Activated CD8-positive, alpha-beta T cell treated with anti-CD3 and anti-CD28 coated beads for 36 hours (primary cell): ENCODE measurements at regions of chr3 and their contacts with region 1.

Region 1: GRCh38 chr3:4493014-4493940 is at the start of gene ITPR1:
- DNase-seq: peak; percentile 99
- ATAC-seq: peak; percentile 93
- H3K4me3 Mint-ChIP-seq: peak within 1 kb of the TSS; percentile 81
- H3K27ac Mint-ChIP-seq: peak within 1 kb of the TSS; percentile 88
- H3K4me1 Mint-ChIP-seq: peaks cover 37% of the 10 kb centered on the region
- H3K27me3 Mint-ChIP-seq: peaks cover 4% of the 10 kb centered on the region
- CTCF ChIP-seq: no peak
- total RNA-seq, gene ITPR1: 93.9 to 98.2 TPM

Region 2: GRCh38 chr3:3648988-3649679 is 844.1 kb before region 1 on chr3:
- CTCF ChIA-PET with region 1: no interaction called
- POLR2A ChIA-PET with region 1: no interaction called
- intact Hi-C with region 1: no loop called
- DNase-seq: no peak
- ATAC-seq: no peak
- H3K4me3 Mint-ChIP-seq: no peak overlapping the region
- H3K27ac Mint-ChIP-seq: no peak overlapping the region
- H3K4me1 Mint-ChIP-seq: no peaks in the 10 kb centered on the region
- H3K27me3 Mint-ChIP-seq: no peaks in the 10 kb centered on the region
- CTCF ChIP-seq: no peak

Region 3: GRCh38 chr3:4387210-4388204 is 105.8 kb before region 1 on chr3:
- CTCF ChIA-PET with region 1: no interaction called
- POLR2A ChIA-PET with region 1: no interaction called
- intact Hi-C with region 1: loop called (anchors 5 kb)
- DNase-seq: no peak
- ATAC-seq: peak; percentile 87
- H3K4me3 Mint-ChIP-seq: no peak overlapping the region
- H3K27ac Mint-ChIP-seq: peak overlapping the region; percentile 66
- H3K4me1 Mint-ChIP-seq: peaks cover 35% of the 10 kb centered on the region
- H3K27me3 Mint-ChIP-seq: no peaks in the 10 kb centered on the region
- CTCF ChIP-seq: no peak

Region 4: DNA sequence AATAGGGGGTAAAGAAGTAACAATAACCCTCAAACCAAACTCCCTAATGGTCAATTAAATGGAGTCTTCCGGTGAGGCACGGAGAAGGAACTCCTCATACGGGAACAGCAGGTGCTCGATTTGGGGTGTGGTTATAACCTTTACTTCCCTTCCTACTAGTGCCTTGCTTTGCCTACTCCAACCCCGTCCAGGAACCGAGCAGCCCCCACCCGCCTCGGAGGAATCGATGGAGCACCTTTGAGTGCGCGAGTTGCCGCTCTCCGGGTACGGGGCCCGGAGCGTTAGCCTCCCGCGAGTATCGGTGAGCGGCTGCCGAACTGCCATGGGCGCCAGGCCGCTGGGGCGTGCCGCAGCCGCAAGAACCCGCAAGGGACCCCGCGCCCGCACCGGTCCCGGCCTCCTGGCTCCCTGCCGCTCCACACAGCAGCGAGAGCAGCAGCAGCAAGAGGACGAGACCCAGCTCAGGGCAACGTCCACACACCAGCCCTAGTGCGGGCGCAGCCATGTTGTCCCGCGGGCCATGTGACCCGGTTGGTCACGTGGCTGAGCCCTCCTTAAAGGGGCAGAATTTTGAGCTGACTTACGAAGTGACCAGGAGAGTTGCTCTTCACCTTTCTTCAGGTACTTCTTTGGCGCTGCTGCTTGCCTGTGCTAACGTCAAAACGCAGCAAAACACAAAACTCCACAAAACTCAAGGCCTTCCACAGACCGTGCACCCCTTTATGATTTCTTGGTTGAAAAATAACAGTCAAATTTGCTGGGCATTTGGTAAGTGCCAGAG is 26.3 kb before region 1 on chr3 and contains the start of gene SUMF1:
- CTCF ChIA-PET with region 1: interaction called, 4 read pairs
- POLR2A ChIA-PET with region 1: interaction called, 48 read pairs
- intact Hi-C with region 1: no loop called
- DNase-seq: peak; percentile 88
- ATAC-seq: peak; percentile 94
- H3K4me3 Mint-ChIP-seq: peak within 1 kb of the TSS; percentile 92
- H3K27ac Mint-ChIP-seq: peak within 1 kb of the TSS; percentile 92
- H3K4me1 Mint-ChIP-seq: peaks cover 18% of the 10 kb centered on the region
- H3K27me3 Mint-ChIP-seq: peaks cover under 1% of the 10 kb centered on the region
- CTCF ChIP-seq: no peak
- total RNA-seq, gene SUMF1: 6.4 to 6.6 TPM

Region 5: DNA sequence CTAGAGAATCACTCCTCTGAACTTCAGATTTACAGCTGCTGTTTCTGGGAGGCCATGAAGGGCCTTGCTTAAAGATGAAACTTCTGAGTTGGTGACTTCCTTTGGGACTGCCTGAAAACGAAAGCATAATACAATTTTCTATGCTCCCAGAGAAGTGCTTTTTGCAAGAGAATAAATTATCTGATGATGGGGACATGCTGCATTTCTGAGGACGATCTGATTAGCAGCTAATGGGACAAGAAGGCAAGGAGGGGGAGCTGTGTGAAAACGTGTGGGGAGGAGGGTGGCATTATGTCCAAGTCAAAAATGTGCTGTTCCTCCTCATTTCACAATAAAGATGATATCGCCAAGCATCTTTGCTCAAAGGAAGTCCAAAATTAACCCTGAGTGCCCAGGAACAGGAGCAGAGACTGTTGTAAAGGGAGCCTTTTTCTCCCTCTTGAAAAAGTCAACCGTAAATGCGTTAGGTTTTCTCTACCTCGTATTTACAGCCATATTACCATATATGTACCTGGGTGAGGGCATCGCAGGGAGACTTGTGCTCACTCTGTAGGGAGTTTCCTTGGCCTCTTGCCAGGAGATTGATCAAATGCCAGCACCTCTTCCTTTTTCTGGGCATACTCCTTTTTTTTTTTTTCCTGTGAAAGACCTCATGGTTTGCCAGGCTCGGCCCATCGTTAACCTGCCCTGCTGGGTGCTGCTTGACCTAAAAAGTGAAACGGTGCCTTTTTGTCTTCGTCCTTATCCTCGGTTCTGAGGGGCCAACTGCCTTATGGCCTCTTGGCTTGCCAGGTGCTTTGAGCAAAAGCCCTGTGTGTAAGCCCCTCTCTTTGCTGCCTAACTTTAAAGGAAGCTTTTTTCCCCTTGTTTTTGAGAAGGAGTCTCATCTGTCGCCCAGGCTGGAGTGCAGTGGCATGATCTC is 11.3 kb after region 1 on chr3:
- CTCF ChIA-PET with region 1: interaction called, 13 read pairs
- POLR2A ChIA-PET with region 1: interaction called, 73 read pairs
- intact Hi-C with region 1: no loop called
- DNase-seq: peak; percentile 45
- ATAC-seq: peak; percentile 66
- H3K4me3 Mint-ChIP-seq: peak overlapping the region; percentile 77
- H3K27ac Mint-ChIP-seq: peak overlapping the region; percentile 92
- H3K4me1 Mint-ChIP-seq: peaks cover 60% of the 10 kb centered on the region
- H3K27me3 Mint-ChIP-seq: no peaks in the 10 kb centered on the region
- CTCF ChIP-seq: no peak

Region 6: DNA sequence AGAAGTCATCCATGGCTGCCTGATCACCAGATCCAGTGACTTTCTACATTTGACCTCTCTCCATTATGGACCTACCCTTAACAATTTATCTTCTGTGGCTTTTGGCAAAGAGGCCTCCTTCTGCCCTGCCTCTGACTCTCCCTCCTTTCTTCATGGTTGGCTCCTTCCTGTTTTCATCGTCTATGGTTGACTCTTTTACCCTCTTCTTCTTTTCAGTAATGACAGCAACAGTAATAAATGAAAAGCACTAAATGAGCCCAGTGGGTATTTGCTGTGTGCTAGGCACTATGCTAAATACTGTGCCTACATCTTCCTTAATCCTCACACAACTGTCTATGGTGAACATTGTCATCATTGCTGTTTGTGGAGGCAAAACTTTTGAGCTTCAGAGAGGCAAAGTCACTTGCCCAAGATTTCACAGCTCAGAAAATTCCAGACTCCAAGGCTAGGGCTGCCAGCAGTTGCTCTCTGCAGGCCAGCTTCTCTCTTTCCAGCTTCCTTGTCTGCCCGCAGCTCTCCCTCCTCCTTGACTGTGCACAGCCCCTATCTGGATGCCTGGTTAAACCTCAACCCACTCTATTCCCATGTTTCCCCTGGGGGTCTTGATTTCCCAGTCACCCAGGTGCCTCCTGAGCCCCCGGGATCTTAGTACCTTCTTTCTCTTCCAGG is 24.5 kb after region 1 on chr3:
- CTCF ChIA-PET with region 1: interaction called, 3 read pairs
- POLR2A ChIA-PET with region 1: interaction called, 36 read pairs
- intact Hi-C with region 1: no loop called
- DNase-seq: no peak
- ATAC-seq: no peak
- H3K4me3 Mint-ChIP-seq: no peak overlapping the region
- H3K27ac Mint-ChIP-seq: peak overlapping the region; percentile 55
- H3K4me1 Mint-ChIP-seq: peaks cover 50% of the 10 kb centered on the region
- H3K27me3 Mint-ChIP-seq: no peaks in the 10 kb centered on the region
- CTCF ChIP-seq: no peak

Region 7: GRCh38 chr3:4584456-4585249 is 91.4 kb after region 1 on chr3:
- CTCF ChIA-PET with region 1: interaction called, 5 read pairs
- POLR2A ChIA-PET with region 1: interaction called, 4 read pairs
- intact Hi-C with region 1: loop called (anchors 5 kb)
- DNase-seq: peak; percentile 58
- ATAC-seq: peak; percentile 81
- H3K4me3 Mint-ChIP-seq: peak overlapping the region; percentile 70
- H3K27ac Mint-ChIP-seq: peak overlapping the region; percentile 89
- H3K4me1 Mint-ChIP-seq: peaks cover 78% of the 10 kb centered on the region
- H3K27me3 Mint-ChIP-seq: no peaks in the 10 kb centered on the region
- CTCF ChIP-seq: no peak

Region 8: DNA sequence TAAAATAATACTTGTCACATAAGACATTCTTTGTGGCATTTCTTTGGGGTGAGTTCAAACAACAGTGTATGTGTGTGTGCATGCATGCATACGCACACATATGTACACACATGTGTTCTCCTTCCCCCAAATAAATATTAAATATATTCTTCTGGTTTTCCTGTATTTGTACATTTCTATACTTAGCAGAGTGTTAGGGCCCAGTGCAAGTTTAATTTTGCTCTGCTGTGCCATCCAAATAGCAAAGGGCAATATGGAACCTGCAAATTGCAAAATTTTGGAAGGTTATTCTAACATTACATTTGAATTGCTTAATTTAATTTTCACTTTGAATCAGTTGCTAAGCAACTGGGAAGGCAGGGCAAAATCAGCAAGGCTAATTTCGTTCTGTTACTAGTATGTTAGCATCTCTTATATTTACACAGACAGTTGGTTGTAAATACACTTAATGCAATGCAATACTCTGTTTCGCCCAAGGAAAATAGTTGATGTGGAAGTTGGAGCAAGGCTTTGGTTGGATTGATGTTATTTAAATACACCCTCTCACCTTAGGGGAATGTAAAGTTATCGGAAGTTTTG is 130.2 kb after region 1 on chr3:
- CTCF ChIA-PET with region 1: no interaction called
- POLR2A ChIA-PET with region 1: no interaction called
- intact Hi-C with region 1: no loop called
- DNase-seq: no peak
- ATAC-seq: no peak
- H3K4me3 Mint-ChIP-seq: no peak overlapping the region
- H3K27ac Mint-ChIP-seq: no peak overlapping the region
- H3K4me1 Mint-ChIP-seq: no peaks in the 10 kb centered on the region
- H3K27me3 Mint-ChIP-seq: no peaks in the 10 kb centered on the region
- CTCF ChIP-seq: no peak

Region 9: DNA sequence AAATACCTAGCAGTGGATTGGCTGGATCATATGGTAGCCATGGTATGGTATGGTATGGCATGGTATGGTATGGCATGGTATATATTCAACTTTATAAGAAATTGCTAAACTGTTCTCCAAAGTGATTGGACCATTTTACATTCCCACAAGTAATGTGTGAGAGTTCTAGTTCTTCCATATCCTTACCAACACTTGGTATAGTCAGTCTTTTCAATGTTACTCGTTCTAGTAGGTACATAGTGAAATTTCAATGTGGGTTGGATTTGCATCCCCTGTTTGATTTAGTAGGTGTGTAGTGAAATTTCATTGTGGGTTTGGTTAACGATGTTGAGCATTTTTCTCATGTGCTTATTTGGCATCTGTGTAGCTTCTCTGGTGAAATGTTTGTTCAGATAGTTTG is 154.1 kb after region 1 on chr3:
- CTCF ChIA-PET with region 1: no interaction called
- POLR2A ChIA-PET with region 1: no interaction called
- intact Hi-C with region 1: no loop called
- DNase-seq: no peak
- ATAC-seq: no peak
- H3K4me3 Mint-ChIP-seq: no peak overlapping the region
- H3K27ac Mint-ChIP-seq: no peak overlapping the region
- H3K4me1 Mint-ChIP-seq: peaks cover 12% of the 10 kb centered on the region
- H3K27me3 Mint-ChIP-seq: no peaks in the 10 kb centered on the region
- CTCF ChIP-seq: no peak

Region 10: DNA sequence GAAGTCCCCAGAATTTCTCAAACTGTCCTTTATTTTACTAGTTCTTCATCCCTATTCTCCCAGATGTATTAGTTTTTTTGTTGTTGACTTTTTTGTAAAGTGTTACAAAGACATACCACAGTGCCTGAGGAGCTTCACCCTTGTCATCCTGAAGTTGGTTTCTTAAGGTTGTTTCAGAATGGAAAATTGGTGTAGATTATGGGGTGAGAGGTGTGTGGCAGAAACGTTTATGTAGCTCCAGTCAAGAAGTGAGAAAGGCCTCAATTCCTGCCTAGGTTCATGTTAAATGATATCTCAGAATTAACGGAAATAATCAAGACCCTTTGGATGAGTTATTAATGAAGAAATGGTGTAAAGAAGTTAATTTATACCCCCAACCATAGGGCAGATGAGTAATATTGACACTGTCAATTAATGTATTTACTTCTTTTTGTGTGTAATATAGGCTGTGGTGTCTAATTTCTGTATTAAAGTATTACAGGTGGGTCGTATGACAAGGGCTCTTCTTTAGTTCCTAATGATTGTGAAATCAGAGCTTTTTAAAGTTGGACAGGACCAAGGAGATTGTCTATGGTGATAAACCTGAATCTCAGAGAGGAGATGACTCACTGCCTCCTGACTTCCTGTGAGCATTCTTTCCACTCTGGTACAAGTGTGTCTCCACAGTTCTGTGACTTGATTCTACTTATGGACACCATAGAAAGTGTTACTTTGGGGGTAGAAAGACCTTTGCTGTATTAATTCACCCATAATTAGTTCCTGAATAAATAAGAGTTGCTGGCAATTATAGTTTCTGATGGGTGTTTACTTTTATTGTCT is 701.3 kb after region 1 on chr3:
- CTCF ChIA-PET with region 1: no interaction called
- POLR2A ChIA-PET with region 1: no interaction called
- intact Hi-C with region 1: loop called (anchors 5 kb)
- DNase-seq: peak; percentile 68
- ATAC-seq: peak; percentile 52
- H3K4me3 Mint-ChIP-seq: peak overlapping the region; percentile 28
- H3K27ac Mint-ChIP-seq: peak overlapping the region; percentile 93
- H3K4me1 Mint-ChIP-seq: peaks cover 80% of the 10 kb centered on the region
- H3K27me3 Mint-ChIP-seq: no peaks in the 10 kb centered on the region
- CTCF ChIP-seq: no peak